Right ventricle myocardium inferior (tissue), 1 donor: ENCODE measurements at regions of chr11 and their contacts with region 1.

Region 1: GRCh38 chr11:117226388-117227385 is 5.2 kb downstream of the PCSK7 start:
- DNase-seq: no peak
- ATAC-seq: peak; percentile 71

Region 2: DNA sequence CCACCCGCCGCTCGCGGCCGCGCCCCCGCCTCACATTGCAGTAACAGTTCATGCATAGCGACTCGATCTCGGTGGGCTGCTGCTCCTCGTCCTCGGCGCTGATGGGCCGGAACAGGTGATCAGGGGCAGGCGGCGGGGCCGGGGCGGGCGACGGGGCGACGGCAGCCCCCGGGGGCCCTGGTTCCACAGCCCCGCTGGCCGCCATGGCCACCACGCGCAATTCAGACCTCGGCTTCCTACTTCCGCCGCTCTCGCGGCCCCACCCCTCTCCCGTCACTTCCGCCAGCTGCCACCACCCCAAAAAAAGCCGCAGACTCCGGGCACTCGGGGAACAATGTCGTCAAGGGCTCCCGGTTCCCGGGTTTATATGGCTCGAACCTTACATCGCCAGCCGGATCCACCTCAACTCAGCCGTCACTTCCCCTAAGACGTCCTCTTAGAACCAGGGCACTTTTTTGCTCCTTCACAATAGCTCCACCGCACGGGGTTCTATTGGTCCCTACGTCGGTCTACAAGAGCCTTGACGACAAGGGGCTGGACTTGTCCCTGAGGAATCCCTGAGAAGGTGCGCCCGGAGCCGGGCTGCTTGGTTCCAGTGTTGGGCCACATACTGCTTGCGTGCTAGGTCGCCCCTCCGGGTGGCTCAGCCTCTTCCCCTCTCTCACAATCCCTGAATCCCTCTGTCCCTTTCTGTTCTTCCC is 438.8 kb before region 1 on chr11 and contains the start of gene ZPR1:
- intact Hi-C with region 1: loop called (anchors 5 kb)
- DNase-seq: peak; percentile 94
- ATAC-seq: peak; percentile 83
- total RNA-seq, gene ZPR1: 23.3 TPM

Region 3: DNA sequence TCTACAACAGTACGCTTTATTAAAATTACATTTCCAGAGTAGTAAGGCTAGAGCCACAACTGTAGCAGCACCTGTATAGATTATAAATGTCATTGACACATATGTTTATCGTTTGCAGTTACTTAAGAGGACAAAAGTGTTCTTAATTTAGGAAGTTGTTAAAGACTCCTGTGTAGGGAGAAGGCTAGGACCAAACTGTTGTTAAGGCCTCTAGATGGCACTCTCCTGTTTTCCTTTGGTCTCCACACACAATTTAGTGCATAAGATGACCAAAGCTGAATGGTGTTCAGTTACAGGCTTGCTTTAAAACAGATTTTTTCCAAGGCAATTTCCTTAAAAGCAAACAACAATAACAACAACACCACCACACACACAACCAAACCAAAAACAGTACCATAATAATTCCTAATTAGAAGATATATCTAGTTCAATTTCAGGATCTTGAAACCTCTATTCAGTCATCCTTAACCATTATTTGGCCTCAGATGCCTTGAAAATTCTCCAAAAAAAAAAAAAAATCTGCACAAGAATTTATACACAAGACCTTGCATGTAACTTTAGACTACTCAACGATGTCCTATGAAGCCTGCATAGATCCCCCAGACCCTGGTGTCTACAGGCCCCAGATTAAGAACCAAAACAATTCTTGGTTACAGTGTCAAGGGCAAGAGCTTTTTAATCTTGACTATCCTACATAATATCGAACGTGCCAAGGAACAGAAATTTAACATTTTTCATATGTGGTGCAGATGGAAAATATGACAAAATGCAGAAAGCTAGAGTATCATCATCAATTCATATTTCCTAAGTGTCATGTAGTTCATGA is 346.7 kb before region 1 on chr11:
- intact Hi-C with region 1: loop called (anchors 5 kb)
- DNase-seq: no peak
- ATAC-seq: peak; percentile 79

Region 4: GRCh38 chr11:117107701-117108590 is 118.7 kb before region 1 on chr11:
- intact Hi-C with region 1: loop called (anchors 2 kb)
- DNase-seq: no peak
- ATAC-seq: no peak

Region 5: GRCh38 chr11:117143871-117144476 is 82.7 kb before region 1 on chr11 and contains the start of gene PAFAH1B2:
- intact Hi-C with region 1: loop called (anchors 1 kb)
- DNase-seq: peak; percentile 97
- ATAC-seq: peak; percentile 98
- total RNA-seq, gene PAFAH1B2: 52.3 TPM

Region 6: DNA sequence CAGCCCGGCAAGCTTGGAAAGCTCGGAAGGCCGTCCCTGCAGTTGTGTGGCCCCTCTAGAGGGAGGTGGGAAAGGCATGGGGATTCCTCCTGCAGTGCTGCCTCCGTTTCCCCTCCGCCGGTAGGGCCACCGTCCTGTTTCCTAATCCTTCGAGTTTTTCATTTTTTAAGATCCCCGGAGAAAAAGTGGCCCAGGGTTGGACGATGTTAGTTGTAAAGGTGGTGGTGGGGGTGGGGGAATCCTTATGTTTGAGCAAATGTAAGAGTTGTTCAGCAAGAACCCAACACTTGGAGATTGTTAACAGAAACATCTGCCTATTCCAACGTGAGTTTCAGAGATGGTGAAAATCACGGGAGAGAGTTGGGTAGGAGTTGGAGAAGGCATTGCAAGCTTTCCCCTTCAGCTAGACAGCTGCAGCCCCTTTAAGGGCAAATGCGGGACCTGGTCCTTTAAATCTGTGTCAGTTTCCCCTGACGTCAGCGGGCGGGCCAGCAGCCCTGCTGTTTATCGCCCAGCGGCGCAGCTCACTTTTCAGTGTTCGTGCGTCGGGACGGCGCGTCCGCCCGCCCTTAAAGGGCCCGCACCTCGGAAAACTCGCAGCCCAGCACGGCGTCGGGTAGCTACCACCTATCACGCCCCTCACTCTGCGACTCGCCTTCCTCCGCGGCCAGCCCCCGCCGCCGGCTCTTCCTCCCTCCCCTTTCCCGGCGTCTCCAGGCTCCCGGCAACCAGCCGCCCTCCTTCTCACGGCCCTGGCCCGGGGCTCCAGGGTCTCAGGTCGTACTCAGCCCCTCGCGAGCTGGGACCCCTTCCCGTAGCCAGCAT is 48.3 kb before region 1 on chr11 and contains the start of gene SIDT2:
- intact Hi-C with region 1: loop called (anchors 2 kb)
- DNase-seq: peak; percentile 97
- ATAC-seq: peak; percentile 95
- total RNA-seq, gene SIDT2: 26.1 TPM